A549 (cell line): ENCODE measurements at regions of chr14 and their contacts with region 1.

Region 1: GRCh38 chr14:24431569-24432258 is 2.0 kb downstream of the KHNYN start:
- DNase-seq: peak; percentile 93 to 95
- ATAC-seq: peak; percentile 72 to 87
- H3K4me3 ChIP-seq: peak overlapping the region; percentile 86; the same call in 2 of the 3 replicates
- H3K27ac ChIP-seq: peak overlapping the region; percentile 97 to 99; a peak in 5 of 6 replicates
- H3K4me1 ChIP-seq: peaks cover 14% of the 10 kb centered on the region
- CTCF ChIP-seq: peak; percentile 90
- EP300 ChIP-seq: no peak
- POLR2A ChIP-seq: no peak
- RAD21 ChIP-seq: peak; percentile 88 to 93

Region 2: GRCh38 chr14:24299255-24300195 is 132.2 kb before region 1 on chr14 and contains the starts of genes DHRS1 and NOP9:
- CTCF ChIA-PET with region 1: interaction called, 1,142 read pairs
- POLR2A ChIA-PET with region 1: interaction called, 6 read pairs
- DNase-seq: peak; percentile 87 to 91
- ATAC-seq: peak; percentile 62 to 82
- H3K4me3 ChIP-seq: peak within 1 kb of the TSS; percentile 81
- H3K27ac ChIP-seq: peak within 1 kb of the TSS; percentile 82 to 92
- H3K4me1 ChIP-seq: peaks cover 15% of the 10 kb centered on the region; the same call in 2 of the 3 replicates
- CTCF ChIP-seq: no peak
- EP300 ChIP-seq: no peak
- POLR2A ChIP-seq: peak; percentile 61
- RAD21 ChIP-seq: no peak
- polyA plus RNA-seq, gene DHRS1: 17.4 and 17.9 TPM in 2 replicates
- polyA plus RNA-seq, gene NOP9: 16.5 and 23.6 TPM in 2 replicates

Region 3: GRCh38 chr14:24332268-24332993 is 99.3 kb before region 1 on chr14:
- CTCF ChIA-PET with region 1: interaction called, 1,142 read pairs
- POLR2A ChIA-PET with region 1: interaction called, 66 read pairs
- DNase-seq: peak; percentile 71 to 93
- ATAC-seq: peak; percentile 71 to 84
- H3K4me3 ChIP-seq: no peak overlapping the region; the same call in 2 of the 3 replicates
- H3K27ac ChIP-seq: peak overlapping the region in 1 of 2 experiments; percentile 45; a peak in 1 of 6 replicates
- H3K4me1 ChIP-seq: peaks cover 3% of the 10 kb centered on the region; the same call in 1 of the 3 replicates
- CTCF ChIP-seq: peak; percentile 46
- EP300 ChIP-seq: no peak
- POLR2A ChIP-seq: no peak
- RAD21 ChIP-seq: peak in 1 of 2 experiments; percentile 46; a peak in 3 of 5 replicates

Region 4: DNA sequence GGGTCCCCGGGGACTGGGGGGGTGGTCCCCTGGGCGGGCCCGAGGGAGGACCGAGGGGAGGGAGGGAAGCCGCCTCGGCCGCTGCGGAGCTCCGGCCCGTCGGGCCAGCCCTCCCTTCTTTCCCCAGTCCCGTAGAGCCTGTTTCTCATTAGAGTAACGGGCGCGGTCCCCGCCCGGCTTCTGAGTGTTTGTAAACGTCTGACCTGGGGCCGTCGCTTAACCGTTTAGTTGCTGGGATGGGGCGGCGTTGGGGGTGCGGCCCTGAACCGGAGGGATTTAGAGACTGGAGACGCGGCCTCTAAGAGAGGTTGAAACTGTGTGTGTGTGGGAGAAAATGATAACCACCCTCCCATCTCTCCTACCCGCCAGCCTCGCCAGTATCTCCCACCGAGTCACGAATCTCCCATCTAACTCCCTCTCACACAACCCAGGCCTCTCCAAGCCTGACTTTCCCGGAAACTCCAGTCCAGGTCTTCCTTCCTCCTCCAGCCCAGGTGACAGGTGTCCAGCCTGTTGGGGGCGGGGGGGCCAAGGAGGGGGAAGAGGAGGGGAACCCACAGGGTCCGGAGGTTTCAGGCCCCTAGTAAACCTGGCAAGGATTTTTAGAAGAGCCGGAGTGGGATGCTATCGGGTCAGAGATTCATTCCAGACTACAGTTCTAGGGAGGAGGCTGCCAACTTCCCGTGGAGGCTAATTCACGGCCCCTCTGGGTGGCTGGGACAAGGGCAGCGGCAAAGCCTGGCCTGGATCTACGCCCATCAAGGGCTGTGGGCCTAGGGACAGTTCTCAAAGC is 64.8 kb before region 1 on chr14:
- CTCF ChIA-PET with region 1: interaction called, 32 read pairs
- POLR2A ChIA-PET with region 1: interaction called, 15 read pairs
- DNase-seq: peak; percentile 43 to 84
- ATAC-seq: peak; percentile 72 to 79
- H3K4me3 ChIP-seq: peak overlapping the region; percentile 39
- H3K27ac ChIP-seq: peak overlapping the region; percentile 45 to 81; a peak in 5 of 6 replicates
- H3K4me1 ChIP-seq: peaks cover 15% of the 10 kb centered on the region
- CTCF ChIP-seq: no peak
- EP300 ChIP-seq: no peak
- POLR2A ChIP-seq: no peak
- RAD21 ChIP-seq: no peak

Region 5: DNA sequence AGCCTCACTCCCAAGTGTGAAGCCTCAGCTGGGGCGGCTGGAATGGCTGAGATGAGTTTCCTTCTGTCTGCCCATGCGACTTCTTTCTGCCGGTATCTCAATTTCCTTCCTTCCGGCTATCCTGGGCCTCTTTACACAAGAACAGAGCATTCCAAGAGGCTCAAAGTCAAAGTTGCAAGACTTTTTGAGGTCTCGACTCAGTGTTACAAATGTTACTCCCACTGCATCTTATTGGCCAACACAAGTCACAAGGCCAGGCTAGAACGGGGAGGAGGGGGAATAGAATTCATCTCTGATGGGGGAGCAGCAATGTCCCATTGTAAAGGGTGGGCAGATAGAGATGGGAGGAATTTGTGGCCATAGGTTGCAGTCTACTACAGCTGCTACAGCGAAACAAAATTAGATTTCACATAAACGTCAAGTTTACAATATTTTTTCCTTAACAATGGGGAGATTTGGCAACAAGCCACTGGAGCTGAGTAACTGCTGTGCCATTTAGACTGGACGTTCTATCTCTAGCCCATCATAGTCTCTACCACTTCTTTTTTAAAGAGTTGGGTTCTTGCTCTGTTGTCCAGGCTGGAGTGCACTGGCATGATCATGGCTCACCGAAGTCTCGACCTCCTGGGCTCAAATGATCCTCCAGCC is 42.4 kb before region 1 on chr14:
- CTCF ChIA-PET with region 1: interaction called, 11 read pairs
- POLR2A ChIA-PET with region 1: interaction called, 6 read pairs
- DNase-seq: no peak
- ATAC-seq: no peak
- H3K4me3 ChIP-seq: no peak overlapping the region
- H3K27ac ChIP-seq: no peak overlapping the region
- H3K4me1 ChIP-seq: peaks cover 14% of the 10 kb centered on the region
- CTCF ChIP-seq: no peak
- EP300 ChIP-seq: no peak
- POLR2A ChIP-seq: no peak
- RAD21 ChIP-seq: no peak

Region 6: GRCh38 chr14:24418492-24418873 is 13.2 kb before region 1 on chr14:
- CTCF ChIA-PET with region 1: interaction called, 254 read pairs
- POLR2A ChIA-PET with region 1: interaction called, 14 read pairs
- DNase-seq: no peak
- ATAC-seq: no peak
- H3K4me3 ChIP-seq: no peak overlapping the region
- H3K27ac ChIP-seq: no peak overlapping the region
- H3K4me1 ChIP-seq: no peaks in the 10 kb centered on the region
- CTCF ChIP-seq: no peak
- EP300 ChIP-seq: no peak
- POLR2A ChIP-seq: no peak
- RAD21 ChIP-seq: no peak

Region 7: GRCh38 chr14:24576182-24576581 is 144.5 kb after region 1 on chr14 and contains the start of gene CTSG:
- CTCF ChIA-PET with region 1: no interaction called
- POLR2A ChIA-PET with region 1: no interaction called
- DNase-seq: no peak
- ATAC-seq: no peak
- H3K4me3 ChIP-seq: no peak within 1 kb of the TSS
- H3K27ac ChIP-seq: no peak within 1 kb of the TSS
- H3K4me1 ChIP-seq: no peaks in the 10 kb centered on the region
- CTCF ChIP-seq: no peak
- EP300 ChIP-seq: no peak
- POLR2A ChIP-seq: no peak
- RAD21 ChIP-seq: no peak
- polyA plus RNA-seq, gene CTSG: not detected in 2 replicates